Activated B cell treated with CpG ODN at 0.5 μM for 24 hours (primary cell): ENCODE measurements at regions of chr9 and their contacts with region 1.

Region 1: DNA sequence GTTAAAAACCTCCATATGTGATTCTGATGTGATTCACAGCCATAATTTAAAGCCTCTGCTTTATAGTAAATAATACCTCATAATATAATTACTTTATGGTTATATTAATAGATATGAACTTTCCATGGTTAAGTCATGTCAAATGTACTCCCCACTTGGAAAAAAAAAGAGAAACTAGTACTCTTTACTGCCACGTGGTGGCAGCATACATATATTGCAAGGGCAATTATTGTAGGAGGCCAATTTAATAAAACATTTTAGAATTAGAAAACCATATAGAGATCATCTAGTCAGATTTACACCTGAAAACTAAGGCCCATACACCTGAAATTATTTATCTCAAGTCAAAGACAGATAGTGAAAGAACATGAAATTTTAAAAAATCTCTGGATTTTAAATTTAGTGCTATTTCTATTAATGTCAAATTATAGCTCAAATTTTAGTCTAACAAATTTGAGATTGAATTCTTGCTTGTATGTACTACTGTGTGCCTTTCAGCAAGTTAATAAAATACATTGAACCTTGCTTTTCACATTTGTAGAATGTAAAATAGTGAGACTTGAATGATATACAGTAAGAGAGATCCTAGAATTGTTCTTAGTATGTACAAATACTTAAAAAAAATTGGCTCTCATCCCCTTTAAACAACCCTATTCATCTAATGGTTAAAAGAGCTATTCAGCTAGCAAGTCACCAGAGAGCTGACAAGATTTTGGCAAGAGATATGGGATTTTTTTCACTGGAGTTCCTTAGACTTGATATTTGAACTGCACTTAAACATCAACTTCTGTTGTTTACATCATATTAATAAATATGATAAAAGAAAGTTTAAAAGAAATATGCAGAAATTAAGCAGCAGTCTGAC is 603.8 kb downstream of the TLE4 start:
- DNase-seq: no peak
- ATAC-seq: peak; percentile 34
- H3K4me3 Mint-ChIP-seq: no peak overlapping the region
- H3K27ac Mint-ChIP-seq: no peak overlapping the region
- H3K4me1 Mint-ChIP-seq: no peaks in the 10 kb centered on the region
- H3K27me3 Mint-ChIP-seq: no peaks in the 10 kb centered on the region
- CTCF ChIP-seq: peak; percentile 82

Region 2: GRCh38 chr9:78439190-78439865 is 1736.2 kb before region 1 on chr9:
- CTCF ChIA-PET with region 1: interaction called, 3 read pairs
- POLR2A ChIA-PET with region 1: no interaction called
- intact Hi-C with region 1: loop called (anchors 1 kb)
- DNase-seq: peak; percentile 37
- ATAC-seq: peak; percentile 78
- H3K4me3 Mint-ChIP-seq: no peak overlapping the region
- H3K27ac Mint-ChIP-seq: no peak overlapping the region
- H3K4me1 Mint-ChIP-seq: no peaks in the 10 kb centered on the region
- H3K27me3 Mint-ChIP-seq: peaks cover 18% of the 10 kb centered on the region
- CTCF ChIP-seq: peak; percentile 78

Region 3: GRCh38 chr9:78601957-78602565 is 1573.5 kb before region 1 on chr9:
- CTCF ChIA-PET with region 1: interaction called, 6 read pairs
- POLR2A ChIA-PET with region 1: no interaction called
- intact Hi-C with region 1: loop called (anchors 5 kb)
- DNase-seq: no peak
- ATAC-seq: no peak
- H3K4me3 Mint-ChIP-seq: no peak overlapping the region
- H3K27ac Mint-ChIP-seq: no peak overlapping the region
- H3K4me1 Mint-ChIP-seq: no peaks in the 10 kb centered on the region
- H3K27me3 Mint-ChIP-seq: peaks cover 8% of the 10 kb centered on the region
- CTCF ChIP-seq: no peak

Region 4: DNA sequence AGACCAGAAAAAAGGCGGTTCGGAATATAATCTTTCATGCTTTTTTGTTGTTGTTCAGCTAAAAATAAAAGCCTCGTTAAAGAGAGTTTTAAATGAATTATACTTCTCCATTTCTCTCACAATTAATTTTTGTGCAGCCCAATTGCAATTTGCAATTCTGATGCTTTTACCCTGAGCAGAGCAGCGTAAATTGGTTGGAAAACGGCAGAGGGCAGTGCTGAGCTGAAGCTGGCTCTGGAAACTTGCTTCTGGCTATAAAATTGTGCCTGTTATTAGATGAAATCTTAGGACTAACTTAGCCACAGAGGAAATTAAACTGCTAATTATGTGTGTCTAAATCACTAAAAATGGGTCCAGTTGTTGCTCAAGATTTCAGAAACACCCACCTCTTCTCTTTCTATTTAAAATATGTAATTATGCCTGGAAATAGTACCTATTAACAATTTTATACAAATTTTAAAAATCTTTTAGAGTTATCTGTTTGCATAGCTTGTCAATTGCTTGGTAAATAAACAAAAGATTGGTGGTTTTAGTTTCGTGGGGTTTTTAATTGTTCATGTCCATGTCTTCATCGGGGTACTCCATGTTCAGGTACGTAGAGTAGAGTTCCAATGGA is 1045.5 kb before region 1 on chr9:
- CTCF ChIA-PET with region 1: no interaction called
- POLR2A ChIA-PET with region 1: no interaction called
- intact Hi-C with region 1: loop called (anchors 2 kb)
- DNase-seq: no peak
- ATAC-seq: no peak
- H3K4me3 Mint-ChIP-seq: no peak overlapping the region
- H3K27ac Mint-ChIP-seq: no peak overlapping the region
- H3K4me1 Mint-ChIP-seq: peaks cover 4% of the 10 kb centered on the region
- H3K27me3 Mint-ChIP-seq: peaks cover 3% of the 10 kb centered on the region
- CTCF ChIP-seq: no peak

Region 5: DNA sequence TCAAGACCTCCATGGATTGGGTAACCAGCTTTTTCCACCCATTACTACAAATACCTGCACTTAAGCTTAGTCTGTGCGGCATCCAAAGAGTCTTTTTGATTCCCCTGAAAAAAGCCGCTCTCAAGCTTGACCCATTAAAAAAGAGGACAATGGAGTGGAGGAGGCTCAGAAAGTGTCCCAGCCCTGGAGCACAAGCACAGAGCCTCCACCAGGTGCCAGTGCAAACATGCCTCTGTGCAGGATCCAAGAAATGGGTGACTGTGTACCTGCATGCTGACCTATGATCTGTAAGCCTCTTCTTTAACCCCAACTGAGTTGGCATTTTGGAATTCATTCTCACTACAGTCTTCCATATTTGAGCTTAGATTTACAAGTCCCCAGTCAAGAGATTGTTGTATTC is 772.0 kb before region 1 on chr9:
- CTCF ChIA-PET with region 1: no interaction called
- POLR2A ChIA-PET with region 1: no interaction called
- intact Hi-C with region 1: loop called (anchors 1 kb)
- DNase-seq: no peak
- ATAC-seq: no peak
- H3K4me3 Mint-ChIP-seq: no peak overlapping the region
- H3K27ac Mint-ChIP-seq: no peak overlapping the region
- H3K4me1 Mint-ChIP-seq: no peaks in the 10 kb centered on the region
- H3K27me3 Mint-ChIP-seq: no peaks in the 10 kb centered on the region
- CTCF ChIP-seq: no peak

Region 6: DNA sequence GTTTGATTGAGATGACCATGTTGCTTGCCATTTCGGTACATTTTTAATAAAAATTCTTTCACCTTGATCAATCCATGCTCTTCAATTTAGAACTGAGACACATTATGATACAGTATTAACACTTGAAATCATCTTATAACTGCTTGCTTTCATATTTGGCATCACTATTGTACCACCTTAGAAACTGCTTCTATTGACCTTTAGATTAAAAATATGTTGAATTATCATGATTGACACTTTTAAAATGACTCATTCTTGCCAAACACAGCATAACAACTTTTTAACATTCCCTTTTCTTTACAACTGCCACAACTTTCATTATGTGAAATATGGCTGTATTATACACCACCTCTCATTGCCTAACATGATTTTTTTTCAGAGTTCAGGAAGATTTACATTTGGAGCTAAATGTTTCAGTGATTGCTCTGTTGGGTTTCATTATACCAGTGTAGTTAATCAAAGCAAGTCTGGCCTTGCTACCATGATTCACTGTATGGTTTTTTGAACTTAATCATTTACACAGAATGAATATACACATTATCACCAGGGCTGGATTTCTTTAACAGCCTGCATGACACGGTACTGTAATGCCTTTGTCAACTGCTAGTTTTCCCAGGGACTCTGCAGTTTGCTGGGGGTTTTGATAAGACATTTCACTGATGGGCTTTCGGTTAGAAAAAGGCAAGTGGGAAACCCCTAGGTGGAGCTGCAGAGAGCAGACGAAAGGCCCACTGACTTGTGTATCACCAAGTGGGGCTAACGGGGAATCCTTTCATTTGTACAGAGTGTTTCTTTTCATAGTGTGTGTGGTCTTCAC is 697.4 kb before region 1 on chr9:
- CTCF ChIA-PET with region 1: no interaction called
- POLR2A ChIA-PET with region 1: no interaction called
- intact Hi-C with region 1: loop called (anchors 10 kb)
- DNase-seq: no peak
- ATAC-seq: no peak
- H3K4me3 Mint-ChIP-seq: no peak overlapping the region
- H3K27ac Mint-ChIP-seq: no peak overlapping the region
- H3K4me1 Mint-ChIP-seq: no peaks in the 10 kb centered on the region
- H3K27me3 Mint-ChIP-seq: no peaks in the 10 kb centered on the region
- CTCF ChIP-seq: no peak

Region 7: GRCh38 chr9:79757881-79758669 is 417.4 kb before region 1 on chr9:
- CTCF ChIA-PET with region 1: interaction called, 15 read pairs
- POLR2A ChIA-PET with region 1: no interaction called
- intact Hi-C with region 1: loop called (anchors 1 kb)
- DNase-seq: no peak
- ATAC-seq: no peak
- H3K4me3 Mint-ChIP-seq: no peak overlapping the region
- H3K27ac Mint-ChIP-seq: no peak overlapping the region
- H3K4me1 Mint-ChIP-seq: no peaks in the 10 kb centered on the region
- H3K27me3 Mint-ChIP-seq: no peaks in the 10 kb centered on the region
- CTCF ChIP-seq: no peak

Region 8: GRCh38 chr9:79817438-79818004 is 358.0 kb before region 1 on chr9:
- CTCF ChIA-PET with region 1: no interaction called
- POLR2A ChIA-PET with region 1: no interaction called
- intact Hi-C with region 1: no loop called
- DNase-seq: peak; percentile 24
- ATAC-seq: peak; percentile 72
- H3K4me3 Mint-ChIP-seq: peak overlapping the region; percentile 17
- H3K27ac Mint-ChIP-seq: peak overlapping the region; percentile 47
- H3K4me1 Mint-ChIP-seq: peaks cover 52% of the 10 kb centered on the region
- H3K27me3 Mint-ChIP-seq: peaks cover 2% of the 10 kb centered on the region
- CTCF ChIP-seq: no peak

Region 9: DNA sequence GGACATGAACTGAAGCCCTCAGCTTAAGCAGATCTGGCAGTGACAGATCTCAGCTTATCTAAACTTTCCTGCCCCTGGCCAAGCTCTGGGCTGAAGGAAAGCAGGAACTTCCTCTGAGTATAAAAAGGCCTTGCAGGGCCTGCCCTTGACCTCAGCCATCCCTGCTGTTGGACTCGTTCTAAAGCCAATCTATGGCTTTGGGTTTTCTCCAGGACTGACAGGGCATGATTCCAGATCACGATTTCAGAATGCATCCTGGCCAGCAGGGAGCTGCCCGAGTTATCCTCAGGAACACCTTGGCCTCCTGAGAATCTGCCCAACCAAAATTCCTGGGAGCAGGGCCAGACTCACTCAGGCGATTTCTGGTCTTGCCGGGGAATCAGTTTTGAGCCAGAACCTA is 101.1 kb before region 1 on chr9:
- CTCF ChIA-PET with region 1: no interaction called
- POLR2A ChIA-PET with region 1: no interaction called
- intact Hi-C with region 1: no loop called
- DNase-seq: no peak
- ATAC-seq: no peak
- H3K4me3 Mint-ChIP-seq: no peak overlapping the region
- H3K27ac Mint-ChIP-seq: no peak overlapping the region
- H3K4me1 Mint-ChIP-seq: peaks cover 33% of the 10 kb centered on the region
- H3K27me3 Mint-ChIP-seq: no peaks in the 10 kb centered on the region
- CTCF ChIP-seq: no peak